CD8-positive, alpha-beta T cell (primary cell): ENCODE measurements at regions of chr9 and their contacts with region 1.

Region 1: GRCh38 chr9:26779072-26779471 is 113.5 kb downstream of the CAAP1 start:
- DNase-seq: no peak
- ATAC-seq: no peak
- H3K4me3 ChIP-seq: no peak overlapping the region
- H3K4me3 Mint-ChIP-seq: no peak overlapping the region
- H3K27ac ChIP-seq: no peak overlapping the region
- H3K27ac Mint-ChIP-seq: no peak overlapping the region
- H3K4me1 ChIP-seq: no peaks in the 10 kb centered on the region
- H3K4me1 Mint-ChIP-seq: no peaks in the 10 kb centered on the region
- H3K27me3 ChIP-seq: no peaks in the 10 kb centered on the region
- H3K27me3 Mint-ChIP-seq: peaks cover 12% of the 10 kb centered on the region
- CTCF ChIP-seq: no peak

Region 2: DNA sequence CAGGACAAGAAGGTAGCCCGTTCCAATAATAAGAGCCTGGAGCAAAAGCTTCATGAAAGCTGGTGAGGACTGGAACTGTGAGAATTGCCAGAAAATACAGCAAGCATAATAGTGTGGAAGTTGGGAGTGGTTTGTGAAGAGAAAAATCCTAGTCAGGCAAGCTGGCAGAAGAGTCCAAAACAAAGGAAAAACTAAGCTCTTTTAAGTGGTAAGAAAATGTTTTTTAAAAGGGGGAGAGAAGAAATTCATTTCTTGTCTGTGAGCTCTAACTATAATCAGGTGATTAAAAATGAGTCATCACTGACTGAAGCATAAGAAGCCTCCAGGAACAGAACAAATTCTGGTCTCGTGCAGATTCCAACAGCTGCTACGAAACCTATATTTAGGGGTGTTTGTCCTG is 10.9 kb after region 1 on chr9:
- CTCF ChIA-PET with region 1: no interaction called
- POLR2A ChIA-PET with region 1: interaction called, 10 read pairs
- intact Hi-C with region 1: loop called in 1 of 2 experiments (anchors 1 kb)
- DNase-seq: no peak
- ATAC-seq: no peak
- H3K4me3 ChIP-seq: no peak overlapping the region
- H3K4me3 Mint-ChIP-seq: no peak overlapping the region
- H3K27ac ChIP-seq: no peak overlapping the region
- H3K27ac Mint-ChIP-seq: no peak overlapping the region
- H3K4me1 ChIP-seq: no peaks in the 10 kb centered on the region
- H3K4me1 Mint-ChIP-seq: no peaks in the 10 kb centered on the region
- H3K27me3 ChIP-seq: no peaks in the 10 kb centered on the region
- H3K27me3 Mint-ChIP-seq: no peaks in the 10 kb centered on the region
- CTCF ChIP-seq: no peak

Region 3: GRCh38 chr9:27125030-27125429 is 346.0 kb after region 1 on chr9:
- CTCF ChIA-PET with region 1: no interaction called
- POLR2A ChIA-PET with region 1: no interaction called
- intact Hi-C with region 1: no loop called
- DNase-seq: no peak
- ATAC-seq: no peak
- H3K4me3 ChIP-seq: no peak overlapping the region
- H3K4me3 Mint-ChIP-seq: no peak overlapping the region
- H3K27ac ChIP-seq: no peak overlapping the region
- H3K27ac Mint-ChIP-seq: no peak overlapping the region
- H3K4me1 ChIP-seq: no peaks in the 10 kb centered on the region
- H3K4me1 Mint-ChIP-seq: no peaks in the 10 kb centered on the region
- H3K27me3 ChIP-seq: no peaks in the 10 kb centered on the region
- H3K27me3 Mint-ChIP-seq: peaks cover 3% of the 10 kb centered on the region
- CTCF ChIP-seq: no peak